Activated T-helper 1 cell treated with anti-CD3 and anti-CD28 coated beads, Interleukin-12 subunit alpha, Interleukin-12 subunit beta, Interleukin-2, Interleukin-4 antibody, amounts not matched to agents 30 ng/mL and 10 ng/mL and 1 ng/mL, durations not matched to agents 14 hours and 24 hours and 36 hours (primary cell): ENCODE measurements at regions of chr11 and their contacts with region 1.

Region 1: DNA sequence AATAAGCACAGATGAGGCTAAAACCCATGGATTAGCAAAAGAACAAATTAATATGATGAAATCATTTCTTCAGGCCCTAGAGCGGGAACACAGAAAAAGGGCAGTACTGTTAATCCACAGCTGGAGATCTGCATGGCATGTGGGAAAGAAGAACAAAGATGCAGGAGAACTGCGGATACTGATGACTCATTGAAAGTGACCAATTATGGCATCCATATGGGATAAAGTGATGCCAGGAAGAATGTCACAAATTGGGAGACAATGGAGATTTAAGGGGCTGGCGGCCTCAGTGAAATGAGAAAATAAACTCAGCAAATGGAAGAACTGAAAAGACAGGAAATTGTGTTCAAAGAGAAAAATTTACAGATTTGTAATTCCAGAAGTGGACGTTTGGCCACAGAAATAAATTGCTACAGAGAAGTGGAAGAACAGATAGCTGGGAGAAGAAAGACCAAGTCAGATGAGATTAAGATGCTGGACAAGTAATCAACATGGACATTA is 39.4 kb downstream of the SIK3 start:
- DNase-seq: no peak
- H3K4me3 Mint-ChIP-seq: no peak overlapping the region
- H3K27ac Mint-ChIP-seq: no peak overlapping the region
- H3K4me1 Mint-ChIP-seq: peaks cover 42% of the 10 kb centered on the region
- H3K27me3 Mint-ChIP-seq: no peaks in the 10 kb centered on the region

Region 2: GRCh38 chr11:116927163-116927974 is 131.4 kb before region 1 on chr11:
- intact Hi-C with region 1: loop called (anchors 1 kb)
- DNase-seq: peak; percentile 5
- H3K4me3 Mint-ChIP-seq: peak overlapping the region; percentile 8
- H3K27ac Mint-ChIP-seq: peak overlapping the region; percentile 67
- H3K4me1 Mint-ChIP-seq: peaks cover 74% of the 10 kb centered on the region
- H3K27me3 Mint-ChIP-seq: no peaks in the 10 kb centered on the region

Region 3: DNA sequence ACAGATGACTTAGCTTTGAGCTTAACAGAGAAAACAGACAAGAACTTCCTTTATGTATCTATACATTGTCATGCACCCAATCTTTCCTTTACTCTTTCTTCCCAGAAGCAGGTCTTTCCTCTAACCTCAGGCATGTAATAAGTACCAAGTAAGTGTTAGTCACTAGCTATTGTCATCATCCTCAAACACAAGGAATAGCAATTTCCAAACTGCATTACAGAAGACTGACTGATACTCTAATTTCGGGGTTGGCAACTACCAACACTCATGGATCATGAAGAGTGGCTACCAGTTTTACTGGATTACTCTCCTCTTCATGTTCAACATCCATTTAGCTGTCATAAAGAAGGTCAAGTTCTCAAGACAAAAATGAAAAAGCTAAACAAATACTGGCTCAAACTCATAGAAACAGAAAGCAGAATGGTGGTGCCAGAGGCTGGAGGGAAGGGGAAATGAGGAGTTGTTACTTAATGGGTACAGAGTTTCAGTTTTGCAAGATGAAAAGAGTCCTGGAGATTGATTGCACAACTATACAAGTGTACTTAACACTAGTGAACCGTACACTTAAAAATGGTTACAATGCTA is 72.2 kb before region 1 on chr11:
- intact Hi-C with region 1: loop called (anchors 1 kb)
- DNase-seq: no peak
- H3K4me3 Mint-ChIP-seq: peak overlapping the region; percentile 65
- H3K27ac Mint-ChIP-seq: peak overlapping the region; percentile 73
- H3K4me1 Mint-ChIP-seq: peaks cover 70% of the 10 kb centered on the region
- H3K27me3 Mint-ChIP-seq: no peaks in the 10 kb centered on the region

Region 4: DNA sequence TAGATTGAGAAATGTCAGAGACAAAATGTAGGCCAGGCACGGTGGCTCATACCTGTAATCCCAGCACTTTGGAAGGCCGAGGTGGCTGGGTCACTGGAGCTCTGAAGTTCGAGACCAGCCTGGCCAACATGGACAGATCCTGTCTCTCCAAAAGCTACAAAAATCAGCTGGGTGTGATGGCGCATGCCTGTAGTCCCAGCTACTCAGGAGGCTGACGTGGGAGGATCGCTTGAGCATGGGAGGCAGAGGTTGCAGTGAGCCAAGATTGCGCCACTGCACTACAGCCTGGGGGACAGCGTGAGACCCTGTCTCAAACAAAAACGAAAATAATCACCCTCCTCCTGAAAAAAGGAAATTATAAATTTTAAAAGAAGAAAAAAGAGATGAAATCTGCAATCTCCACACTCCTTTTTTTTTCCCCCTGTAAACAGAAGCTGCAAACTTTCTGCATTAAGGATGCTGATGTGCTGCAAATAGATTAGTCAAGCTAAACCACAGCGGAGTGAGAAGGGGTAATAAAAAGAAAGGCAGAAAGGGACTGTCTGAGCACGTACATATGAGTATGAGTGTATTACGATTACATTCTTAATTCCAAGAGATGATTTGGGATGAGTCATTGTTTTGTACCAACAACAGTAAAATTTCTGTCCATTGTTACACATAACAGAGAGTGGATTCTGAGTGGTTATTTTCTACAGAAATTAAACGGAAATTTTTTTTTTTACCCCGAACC is 47.8 kb before region 1 on chr11:
- intact Hi-C with region 1: loop called (anchors 1 kb)
- DNase-seq: no peak
- H3K4me3 Mint-ChIP-seq: no peak overlapping the region
- H3K27ac Mint-ChIP-seq: peak overlapping the region; percentile 78
- H3K4me1 Mint-ChIP-seq: peaks cover 38% of the 10 kb centered on the region
- H3K27me3 Mint-ChIP-seq: no peaks in the 10 kb centered on the region

Region 5: GRCh38 chr11:117026593-117027330 is 32.0 kb before region 1 on chr11:
- intact Hi-C with region 1: loop called (anchors 1 kb)
- DNase-seq: no peak
- H3K4me3 Mint-ChIP-seq: peak overlapping the region; percentile 38
- H3K27ac Mint-ChIP-seq: peak overlapping the region; percentile 90
- H3K4me1 Mint-ChIP-seq: peaks cover 63% of the 10 kb centered on the region
- H3K27me3 Mint-ChIP-seq: no peaks in the 10 kb centered on the region

Region 6: GRCh38 chr11:117072517-117073461 is 14.0 kb after region 1 on chr11:
- intact Hi-C with region 1: loop called (anchors 1 kb)
- DNase-seq: no peak
- H3K4me3 Mint-ChIP-seq: peak overlapping the region; percentile 19
- H3K27ac Mint-ChIP-seq: peak overlapping the region; percentile 53
- H3K4me1 Mint-ChIP-seq: peaks cover 58% of the 10 kb centered on the region
- H3K27me3 Mint-ChIP-seq: no peaks in the 10 kb centered on the region